GM18951 (cell line): ENCODE measurements at regions of chr11 and their contacts with region 1.

Region 1: DNA sequence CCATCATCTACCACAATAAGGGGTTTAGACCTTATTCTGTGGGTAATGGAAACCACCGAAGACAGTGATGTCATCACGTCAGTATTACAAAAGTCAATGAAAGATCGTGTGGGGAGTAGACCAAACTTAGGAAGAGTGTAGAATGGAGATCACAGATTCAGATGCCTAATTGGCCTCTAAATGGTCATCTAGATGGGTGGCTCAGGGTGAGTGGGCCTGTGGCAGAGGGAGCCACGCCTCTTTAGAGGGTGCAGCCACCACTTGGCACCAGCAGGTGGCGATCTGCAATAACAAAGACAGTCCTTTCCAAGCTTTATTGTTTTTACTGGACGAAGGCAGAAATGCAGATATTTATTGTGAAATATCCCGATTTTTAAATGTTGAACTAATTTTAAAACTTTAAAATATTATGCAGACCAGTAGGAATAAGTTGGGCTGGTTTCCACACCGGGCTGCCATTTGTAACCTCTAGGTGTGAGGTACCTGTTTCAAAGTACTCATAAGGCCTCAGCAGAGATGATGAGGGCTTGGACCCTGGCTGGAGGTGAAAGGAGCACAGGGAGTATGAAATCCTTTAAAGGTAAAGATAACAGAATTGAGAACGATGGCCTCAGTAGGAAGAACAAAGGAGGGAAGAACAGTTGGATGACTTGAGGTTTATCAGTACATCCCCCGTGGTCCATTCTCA is 222.0 kb downstream of the DBX1 start:
- POLR2A ChIP-seq: no peak

Region 2: DNA sequence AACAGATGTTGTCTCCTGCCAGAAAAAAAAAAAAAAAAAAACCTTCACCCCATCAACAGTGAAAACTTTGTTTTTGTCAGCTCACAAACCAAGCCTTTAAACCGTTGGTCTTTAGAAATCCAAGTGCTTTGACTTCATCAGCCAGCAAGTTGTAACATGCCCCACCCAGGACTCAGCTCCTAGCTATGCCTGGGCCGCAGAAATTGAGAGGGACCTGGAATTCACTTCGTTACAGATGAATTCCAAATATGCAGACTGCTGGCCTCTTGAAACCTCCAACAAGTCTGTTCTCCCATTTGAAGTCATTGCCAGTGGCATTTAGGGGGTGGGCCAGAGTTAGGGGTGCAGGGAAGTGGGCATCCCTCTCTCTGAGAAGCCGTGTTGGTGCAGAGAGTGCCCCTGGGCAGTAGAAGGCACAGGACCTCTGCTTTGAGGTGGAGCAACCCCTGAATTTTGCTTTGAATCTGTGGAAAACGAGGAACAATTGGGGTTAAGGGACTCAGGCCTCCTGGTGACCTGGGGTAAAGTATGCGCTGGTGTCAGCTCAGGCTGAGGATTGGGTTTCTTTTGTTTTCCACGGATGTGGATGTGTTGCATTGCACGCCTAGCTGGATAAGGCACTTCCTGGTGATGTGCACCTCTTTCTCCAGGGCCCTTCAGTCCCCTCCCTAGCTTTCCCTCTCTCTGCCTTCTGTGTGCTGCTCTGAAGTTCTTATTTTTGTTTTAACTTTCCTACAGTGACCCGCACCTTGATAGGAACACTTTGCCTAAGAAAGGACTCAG is 112.4 kb after region 1 on chr11:
- in situ Hi-C with region 1: no loop called
- POLR2A ChIP-seq: no peak

Region 3: GRCh38 chr11:20337526-20338154 is 399.3 kb after region 1 on chr11:
- in situ Hi-C with region 1: loop called (anchors 25 kb)
- POLR2A ChIP-seq: no peak